ENCODE measurements at regions of chr11 and their contacts with region 1.

Region 1: DNA sequence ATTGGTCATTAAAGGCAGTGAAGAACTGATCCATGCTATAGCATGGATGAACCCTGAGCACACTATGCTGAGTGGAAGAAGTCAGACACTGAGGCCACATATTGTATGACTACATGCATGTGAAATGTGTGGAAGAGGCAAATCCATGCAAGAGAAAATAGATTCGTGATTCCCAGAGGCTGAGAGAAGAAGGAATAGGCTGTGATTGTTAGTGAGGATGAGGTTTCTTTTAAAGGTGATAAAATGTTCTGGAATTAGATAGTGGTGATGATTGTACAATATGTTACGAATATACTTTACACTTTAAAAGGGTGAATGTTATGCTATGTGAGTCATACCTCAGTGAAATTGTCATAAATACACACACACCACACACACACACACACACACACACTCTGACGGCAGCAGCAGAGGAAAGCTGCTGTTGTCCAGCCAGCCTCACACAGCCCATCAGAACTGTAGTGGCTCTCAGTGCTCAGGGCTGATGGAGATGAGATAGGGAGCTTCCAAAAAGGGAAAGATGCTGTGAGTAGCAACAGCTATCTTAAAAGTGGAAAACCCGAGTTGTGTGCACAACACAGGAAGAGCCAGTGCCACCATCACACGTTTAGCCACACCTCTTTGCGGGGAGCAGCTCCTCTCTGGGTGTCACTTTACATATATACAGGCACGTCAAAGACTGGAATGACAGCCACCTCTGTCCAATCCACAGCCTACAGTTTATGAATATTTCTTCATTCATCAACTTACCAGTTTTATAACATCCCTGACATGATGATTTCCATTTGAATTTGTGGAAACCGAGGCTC is 153.0 kb downstream of the SPATA19 start:
- DNase-seq: no peak
- H3K4me3 ChIP-seq: no peak overlapping the region
- H3K27ac ChIP-seq: no peak overlapping the region
- H3K4me1 ChIP-seq: no peaks in the 10 kb centered on the region
- CTCF ChIP-seq: no peak

Region 2: GRCh38 chr11:133669371-133670053 is 22.8 kb before region 1 on chr11:
- CTCF ChIA-PET with region 1: no interaction called
- POLR2A ChIA-PET with region 1: interaction called, 12 read pairs
- intact Hi-C with region 1: no loop called
- DNase-seq: no peak
- H3K4me3 ChIP-seq: no peak overlapping the region
- H3K27ac ChIP-seq: no peak overlapping the region
- H3K4me1 ChIP-seq: no peaks in the 10 kb centered on the region
- CTCF ChIP-seq: no peak

Region 3: GRCh38 chr11:133889893-133890292 is 197.6 kb after region 1 on chr11:
- CTCF ChIA-PET with region 1: no interaction called
- POLR2A ChIA-PET with region 1: no interaction called
- intact Hi-C with region 1: no loop called
- DNase-seq: no peak
- H3K4me3 ChIP-seq: no peak overlapping the region
- H3K27ac ChIP-seq: no peak overlapping the region
- H3K4me1 ChIP-seq: no peaks in the 10 kb centered on the region
- CTCF ChIP-seq: no peak

Measured in OCI-LY7 (cell line).